SK-N-SH (cell line): ENCODE measurements at regions of chr17 and their contacts with region 1.

Region 1: DNA sequence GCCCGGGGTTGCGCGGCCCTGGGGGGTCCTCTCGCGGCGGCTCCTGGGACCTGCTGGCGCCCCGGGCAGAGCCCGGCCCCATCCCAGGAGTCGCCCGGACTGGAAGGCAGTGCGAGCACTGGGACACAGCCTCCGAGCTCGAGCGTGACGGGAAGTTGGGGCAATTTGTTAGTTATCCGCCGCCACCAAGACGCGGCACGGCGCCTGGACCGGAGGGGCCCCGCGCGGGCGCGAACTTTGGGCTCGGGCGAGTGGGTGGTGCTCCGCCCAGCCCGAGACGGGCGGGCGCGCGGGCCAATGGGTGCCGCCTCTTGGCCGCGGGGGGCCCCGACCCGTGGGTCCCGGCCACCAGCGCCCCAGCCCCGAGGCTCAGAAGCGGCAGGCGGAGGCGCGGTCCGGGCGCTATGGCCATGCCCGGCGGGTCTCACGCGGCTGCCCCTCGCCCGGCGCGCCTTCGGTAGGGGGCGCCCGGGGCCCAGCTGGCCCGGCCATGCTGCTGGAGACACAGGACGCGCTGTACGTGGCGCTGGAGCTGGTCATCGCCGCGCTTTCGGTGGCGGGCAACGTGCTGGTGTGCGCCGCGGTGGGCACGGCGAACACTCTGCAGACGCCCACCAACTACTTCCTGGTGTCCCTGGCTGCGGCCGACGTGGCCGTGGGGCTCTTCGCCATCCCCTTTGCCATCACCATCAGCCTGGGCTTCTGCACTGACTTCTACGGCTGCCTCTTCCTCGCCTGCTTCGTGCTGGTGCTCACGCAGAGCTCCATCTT is at the start of gene ADORA2B:
- DNase-seq: peak; percentile 94
- H3K4me3 ChIP-seq: peak within 1 kb of the TSS; percentile 57 to 71
- H3K27ac ChIP-seq: no peak within 1 kb of the TSS
- H3K4me1 ChIP-seq: peaks cover 0 to 7% of the 10 kb centered on the region in 2 experiments; a peak in 1 of 4 replicates
- H3K27me3 ChIP-seq: no peaks in the 10 kb centered on the region
- CTCF ChIP-seq: peak; percentile 51
- EP300 ChIP-seq: no peak
- RAD21 ChIP-seq: peak; percentile 54
- polyA plus RNA-seq, gene ADORA2B: 12.6 and 14.4 TPM in 2 replicates

Region 2: GRCh38 chr17:15883617-15884111 is 61.3 kb before region 1 on chr17:
- CTCF ChIA-PET with region 1: no interaction called
- POLR2A ChIA-PET with region 1: no interaction called
- DNase-seq: no peak
- H3K4me3 ChIP-seq: no peak overlapping the region
- H3K27ac ChIP-seq: no peak overlapping the region
- H3K4me1 ChIP-seq: no peaks in the 10 kb centered on the region; a peak in 1 of 4 replicates
- H3K27me3 ChIP-seq: no peaks in the 10 kb centered on the region
- CTCF ChIP-seq: no peak
- EP300 ChIP-seq: no peak
- RAD21 ChIP-seq: no peak

Region 3: DNA sequence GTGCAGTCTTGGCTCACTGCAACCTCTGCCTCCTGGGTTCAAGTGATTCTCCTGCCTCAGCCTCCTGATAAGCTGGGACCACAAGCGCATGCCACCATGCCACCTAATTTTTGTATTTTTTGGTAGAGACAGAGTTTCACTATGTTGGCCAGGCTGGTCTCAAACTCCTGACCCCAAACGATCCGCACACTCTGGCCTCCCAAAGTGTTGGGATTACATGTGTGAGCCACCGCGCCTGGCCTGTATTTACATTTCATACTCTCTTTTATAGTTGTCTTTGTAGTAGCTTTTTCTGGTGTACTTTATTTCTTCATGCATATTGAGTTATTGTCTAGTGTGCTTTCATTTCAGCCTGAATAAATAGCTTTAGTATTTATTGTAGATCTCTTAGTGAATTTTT is 10.1 kb before region 1 on chr17:
- CTCF ChIA-PET with region 1: interaction called, 20 read pairs
- POLR2A ChIA-PET with region 1: no interaction called
- DNase-seq: no peak
- H3K4me3 ChIP-seq: no peak overlapping the region
- H3K27ac ChIP-seq: no peak overlapping the region
- H3K4me1 ChIP-seq: no peaks in the 10 kb centered on the region
- H3K27me3 ChIP-seq: no peaks in the 10 kb centered on the region
- CTCF ChIP-seq: no peak
- EP300 ChIP-seq: no peak
- RAD21 ChIP-seq: no peak

Region 4: GRCh38 chr17:15957608-15958307 is 12.8 kb after region 1 on chr17:
- CTCF ChIA-PET with region 1: interaction called, 14 read pairs
- POLR2A ChIA-PET with region 1: no interaction called
- DNase-seq: no peak
- H3K4me3 ChIP-seq: no peak overlapping the region
- H3K27ac ChIP-seq: peak overlapping the region in 1 of 2 experiments; percentile 94; a peak in 2 of 4 replicates
- H3K4me1 ChIP-seq: peaks cover 0 to 22% of the 10 kb centered on the region in 2 experiments; a peak in 1 of 4 replicates
- H3K27me3 ChIP-seq: no peaks in the 10 kb centered on the region
- CTCF ChIP-seq: no peak
- EP300 ChIP-seq: no peak
- RAD21 ChIP-seq: no peak

Region 5: DNA sequence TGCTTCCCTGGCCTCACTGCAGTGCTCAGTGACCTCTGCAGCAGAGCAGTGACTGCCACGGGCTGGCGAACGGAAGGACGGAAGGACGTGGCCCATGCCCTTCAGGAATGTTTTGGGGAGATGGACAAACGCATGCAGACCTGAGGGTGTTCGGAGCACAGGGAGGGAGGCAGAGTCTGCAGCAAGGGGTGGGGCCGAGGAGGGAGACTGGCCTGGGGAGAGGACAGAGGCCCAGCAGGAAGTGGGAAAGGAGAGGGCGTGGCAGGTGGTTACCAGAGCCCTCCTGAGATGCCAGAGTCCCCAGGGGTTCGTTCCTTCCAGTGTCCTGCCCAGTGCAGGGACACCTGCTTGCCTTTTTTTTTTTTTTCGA is 21.9 kb after region 1 on chr17:
- CTCF ChIA-PET with region 1: interaction called, 20 read pairs
- POLR2A ChIA-PET with region 1: no interaction called
- DNase-seq: no peak
- H3K4me3 ChIP-seq: no peak overlapping the region
- H3K27ac ChIP-seq: no peak overlapping the region
- H3K4me1 ChIP-seq: peaks cover 17 to 22% of the 10 kb centered on the region in 2 experiments; a peak in 2 of 4 replicates
- H3K27me3 ChIP-seq: no peaks in the 10 kb centered on the region
- CTCF ChIP-seq: no peak
- EP300 ChIP-seq: no peak
- RAD21 ChIP-seq: no peak

Region 6: DNA sequence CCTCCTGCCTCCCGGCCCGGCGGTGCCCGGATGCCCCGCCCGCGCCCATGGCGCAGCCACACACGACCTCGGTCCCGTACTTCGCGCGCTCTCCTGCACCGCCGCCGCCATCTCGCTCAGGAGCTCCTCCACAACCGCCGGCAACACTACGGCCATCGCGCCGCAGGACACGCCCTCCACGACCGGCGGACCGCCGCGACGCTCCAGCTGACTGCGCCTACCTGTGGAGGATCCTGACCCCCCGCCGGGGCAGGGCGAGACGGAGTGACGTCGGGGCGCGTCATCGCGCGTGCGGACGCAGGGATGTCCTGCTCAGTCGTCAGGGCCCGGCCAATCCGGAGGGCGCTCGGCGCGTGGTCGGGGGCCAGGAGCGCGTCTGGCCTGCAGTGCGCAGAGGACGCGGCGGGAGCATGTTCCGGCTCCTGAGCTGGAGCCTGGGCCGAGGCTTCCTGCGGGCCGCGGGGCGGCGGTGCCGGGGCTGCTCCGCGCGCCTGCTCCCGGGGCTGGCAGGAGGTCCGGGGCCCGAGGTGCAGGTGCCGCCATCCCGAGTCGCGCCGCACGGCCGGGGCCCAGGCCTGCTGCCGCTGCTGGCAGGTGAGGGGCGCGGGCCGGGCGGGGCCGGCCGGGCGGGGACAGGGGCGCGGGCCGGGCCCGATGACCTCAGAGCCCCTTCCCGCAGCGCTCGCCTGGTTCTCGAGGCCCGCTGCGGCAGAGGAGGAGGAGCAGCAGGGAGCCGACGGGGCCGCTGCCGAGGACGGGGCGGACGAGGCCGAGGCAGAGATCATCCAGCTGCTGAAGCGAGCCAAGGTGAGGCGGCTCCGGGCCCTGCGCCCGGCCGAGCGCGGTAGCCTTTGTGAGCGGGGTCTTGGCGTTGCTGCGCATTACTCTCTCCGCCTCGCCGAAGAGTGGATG is 54.8 kb after region 1 on chr17 and contains the starts of genes TTC19 and ZSWIM7:
- CTCF ChIA-PET with region 1: interaction called, 42 read pairs
- POLR2A ChIA-PET with region 1: interaction called, 3 read pairs
- DNase-seq: peak; percentile 99
- H3K4me3 ChIP-seq: peak within 1 kb of the TSS; percentile 82 to 91
- H3K27ac ChIP-seq: peak within 1 kb of the TSS; percentile 93 to 95
- H3K4me1 ChIP-seq: peaks cover 0 to 6% of the 10 kb centered on the region in 2 experiments; a peak in 2 of 4 replicates
- H3K27me3 ChIP-seq: no peaks in the 10 kb centered on the region
- CTCF ChIP-seq: no peak
- EP300 ChIP-seq: no peak
- RAD21 ChIP-seq: no peak
- polyA plus RNA-seq, gene TTC19: 6.6 and 6.9 TPM in 2 replicates
- polyA plus RNA-seq, gene ZSWIM7: 48.8 and 63.3 TPM in 2 replicates